RWPE1 (cell line): ENCODE measurements at regions of chr17 and their contacts with region 1.

Region 1: GRCh38 chr17:78970834-78971773 is 8.6 kb downstream of the LGALS3BP start:
- DNase-seq: peak; percentile 65
- H3K27ac ChIP-seq: peak overlapping the region; percentile 88
- CTCF ChIP-seq: peak; percentile 94

Region 2: DNA sequence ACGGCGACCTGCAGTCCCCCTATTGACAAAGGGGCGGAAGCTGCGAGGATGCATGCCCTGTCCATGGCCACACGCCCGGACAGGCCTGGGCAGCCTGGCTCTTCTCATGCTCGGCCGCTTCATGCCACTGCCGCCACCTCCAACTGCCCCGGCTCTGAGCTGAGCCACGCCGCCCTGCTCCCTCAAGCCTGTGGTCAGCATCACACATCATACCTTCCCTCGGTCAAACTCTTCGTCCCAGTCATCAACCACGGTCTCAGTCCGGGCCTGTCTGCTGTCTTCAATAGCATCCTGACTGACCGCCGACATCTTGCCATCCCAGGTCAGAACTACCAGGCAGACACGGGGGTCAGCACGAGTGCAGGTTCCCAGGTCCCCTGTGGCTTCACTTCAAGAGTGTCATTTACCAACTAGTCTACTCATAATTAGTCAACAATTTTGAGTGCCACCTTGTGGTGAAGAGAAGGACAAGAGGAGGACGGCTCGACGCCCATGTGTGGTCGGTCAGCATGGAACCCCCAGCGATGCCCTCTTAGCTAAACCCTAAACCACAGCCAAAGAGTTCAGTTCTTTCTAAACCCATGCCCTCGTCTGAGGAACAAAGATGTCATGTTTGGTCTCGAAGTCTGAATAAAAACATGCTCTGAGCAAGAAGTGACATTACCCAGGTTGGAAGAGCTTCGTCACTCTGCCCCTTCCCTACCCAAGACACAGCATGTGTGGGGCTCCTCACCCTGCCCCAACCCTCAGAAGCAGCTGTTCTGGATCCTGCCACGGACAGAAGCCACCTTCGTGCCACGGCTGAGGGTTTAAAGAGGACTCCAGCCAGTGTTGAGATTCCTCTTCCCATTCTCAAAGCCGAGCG is 172.2 kb before region 1 on chr17:
- CTCF ChIA-PET with region 1: no interaction called
- POLR2A ChIA-PET with region 1: no interaction called
- DNase-seq: no peak
- H3K27ac ChIP-seq: peak overlapping the region; percentile 48
- CTCF ChIP-seq: peak; percentile 50

Region 3: GRCh38 chr17:78849026-78849425 is 122.1 kb before region 1 on chr17:
- CTCF ChIA-PET with region 1: no interaction called
- POLR2A ChIA-PET with region 1: no interaction called
- DNase-seq: no peak
- H3K27ac ChIP-seq: no peak overlapping the region; the same call in 1 of the 2 replicates
- CTCF ChIP-seq: no peak

Region 4: DNA sequence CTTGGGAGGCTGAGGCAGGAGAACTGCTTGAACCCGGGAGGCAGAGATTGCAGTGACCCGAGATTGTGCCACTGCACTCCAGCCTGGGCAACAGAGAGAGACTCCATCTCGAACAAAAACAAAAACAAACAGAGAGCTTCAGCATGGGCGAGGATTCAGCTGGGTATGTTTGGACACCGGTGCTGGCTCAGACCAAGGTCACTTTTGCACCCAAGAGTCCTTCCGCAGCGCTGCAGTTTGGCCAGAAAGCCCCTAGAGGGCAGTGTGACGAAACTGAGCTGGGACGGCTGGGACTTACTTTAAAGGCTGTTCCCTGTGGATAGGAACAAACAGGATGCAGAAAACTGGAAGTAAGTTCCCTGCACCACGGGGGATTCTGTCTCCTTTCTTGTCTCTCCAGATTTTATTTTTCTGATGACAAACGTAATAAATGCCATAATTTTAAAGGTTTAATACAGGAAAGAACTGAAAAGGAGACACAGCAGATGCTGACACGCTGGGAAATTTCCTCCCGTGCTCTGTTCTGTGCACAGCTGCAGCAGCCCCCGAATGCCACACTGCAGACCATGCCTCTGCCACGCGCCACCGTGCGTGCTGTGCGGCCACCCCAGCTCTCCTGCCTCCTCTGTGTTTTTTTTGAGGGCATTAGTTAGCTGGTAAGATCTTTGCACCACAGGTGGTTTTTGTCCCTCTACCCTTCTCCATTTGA is 105.3 kb before region 1 on chr17:
- CTCF ChIA-PET with region 1: interaction called, 44 read pairs
- POLR2A ChIA-PET with region 1: no interaction called
- DNase-seq: peak; percentile 64
- H3K27ac ChIP-seq: peak overlapping the region; percentile 64
- CTCF ChIP-seq: peak; percentile 98

Region 5: GRCh38 chr17:78953356-78954265 is 17.5 kb before region 1 on chr17:
- CTCF ChIA-PET with region 1: interaction called, 10 read pairs
- POLR2A ChIA-PET with region 1: no interaction called
- DNase-seq: no peak
- H3K27ac ChIP-seq: no peak overlapping the region
- CTCF ChIP-seq: no peak